Activated CD4-positive, alpha-beta memory T cell treated with anti-CD3 and anti-CD28 coated beads for 36 hours (primary cell): ENCODE measurements at regions of chr6 and their contacts with region 1.

Region 1: GRCh38 chr6:127918506-127919427 is 17.9 kb upstream of the THEMIS start:
- DNase-seq: no peak
- H3K4me3 Mint-ChIP-seq: peak overlapping the region; percentile 49
- H3K27ac Mint-ChIP-seq: peak overlapping the region; percentile 44
- H3K4me1 Mint-ChIP-seq: peaks cover 85% of the 10 kb centered on the region
- H3K27me3 Mint-ChIP-seq: no peaks in the 10 kb centered on the region

Region 2: DNA sequence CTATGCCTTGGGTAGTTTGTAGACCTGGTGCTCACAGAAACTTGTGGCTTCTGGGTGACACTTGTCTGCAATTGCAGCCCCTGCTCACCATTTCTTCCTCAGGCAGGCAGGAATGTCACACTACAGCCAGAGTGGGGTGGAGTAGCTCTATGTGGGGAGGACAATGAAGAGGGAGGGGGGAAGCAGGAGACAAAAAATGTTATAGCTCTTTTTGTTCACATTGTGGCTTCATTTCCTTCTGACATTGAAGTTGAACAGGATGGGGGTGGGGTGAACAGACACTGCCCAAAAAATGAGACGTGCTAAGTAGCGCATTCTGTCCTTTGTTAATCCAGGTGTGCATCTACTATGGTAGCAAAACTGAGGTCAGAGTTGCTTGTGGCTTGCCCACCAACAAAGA is 17.8 kb before region 1 on chr6 and contains the start of gene THEMIS:
- CTCF ChIA-PET with region 1: interaction called, 4 read pairs
- POLR2A ChIA-PET with region 1: interaction called, 4 read pairs
- intact Hi-C with region 1: loop called (anchors 2 kb)
- DNase-seq: peak; percentile 50
- H3K4me3 Mint-ChIP-seq: peak within 1 kb of the TSS; percentile 89
- H3K27ac Mint-ChIP-seq: peak within 1 kb of the TSS; percentile 93
- H3K4me1 Mint-ChIP-seq: peaks cover 64% of the 10 kb centered on the region
- H3K27me3 Mint-ChIP-seq: no peaks in the 10 kb centered on the region
- total RNA-seq, gene THEMIS: 9.5 to 11.5 TPM

Region 3: DNA sequence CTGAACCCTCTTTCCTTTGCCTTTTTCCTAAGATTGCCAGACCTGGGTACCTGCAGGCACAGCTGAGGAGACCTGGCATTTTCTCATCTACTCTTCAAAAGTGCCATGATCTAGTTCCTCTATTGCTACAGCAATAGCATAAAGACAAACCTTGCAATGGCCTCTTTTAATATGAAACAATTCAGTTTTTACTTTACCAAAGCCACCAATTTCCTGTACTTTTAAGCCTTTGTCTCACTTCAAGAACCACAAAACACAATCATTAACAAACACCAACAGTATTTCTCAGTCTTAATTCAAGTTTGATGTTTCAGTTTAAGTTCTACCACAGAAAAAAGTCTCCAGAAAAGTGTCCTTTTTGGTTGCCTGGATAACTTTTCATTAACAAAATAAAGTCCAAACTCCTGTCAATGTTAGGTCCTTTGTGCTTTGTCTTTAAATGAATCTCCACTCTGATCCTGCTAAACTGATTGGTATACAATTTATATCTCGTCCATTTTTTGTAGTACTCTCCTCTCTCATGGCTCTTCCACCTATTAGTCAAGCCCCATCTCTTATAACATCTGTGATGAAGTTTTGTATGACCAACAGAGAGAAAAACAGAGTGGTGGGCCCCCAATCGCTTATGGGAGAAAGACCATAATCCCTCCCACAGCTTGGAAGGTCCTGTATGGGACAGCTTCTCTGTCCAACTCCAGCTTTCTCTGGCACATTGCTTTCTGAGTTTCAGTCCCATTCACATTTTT is 32.6 kb after region 1 on chr6:
- CTCF ChIA-PET with region 1: no interaction called
- POLR2A ChIA-PET with region 1: no interaction called
- intact Hi-C with region 1: loop called (anchors 2 kb)
- DNase-seq: no peak
- H3K4me3 Mint-ChIP-seq: peak overlapping the region; percentile 43
- H3K27ac Mint-ChIP-seq: peak overlapping the region; percentile 55
- H3K4me1 Mint-ChIP-seq: peaks cover 48% of the 10 kb centered on the region
- H3K27me3 Mint-ChIP-seq: no peaks in the 10 kb centered on the region